Ovary (tissue), 10 donors: ENCODE measurements at regions of chr4 and their contacts with region 1.

Region 1: GRCh38 chr4:102439236-102439614 is 61.9 kb upstream of the NFKB1 start:
- DNase-seq: peak in 2 of 5 donors; percentile 13 to 58
- H3K4me3 ChIP-seq: no peak overlapping the region
- H3K27ac ChIP-seq: peak overlapping the region in 1 of 2 donors; percentile 57
- H3K4me1 ChIP-seq: peaks cover 4% of the 10 kb centered on the region
- H3K27me3 ChIP-seq: no peaks in the 10 kb centered on the region
- CTCF ChIP-seq: no peak
- EP300 ChIP-seq: peak; percentile 74
- POLR2A ChIP-seq: no peak

Region 2: DNA sequence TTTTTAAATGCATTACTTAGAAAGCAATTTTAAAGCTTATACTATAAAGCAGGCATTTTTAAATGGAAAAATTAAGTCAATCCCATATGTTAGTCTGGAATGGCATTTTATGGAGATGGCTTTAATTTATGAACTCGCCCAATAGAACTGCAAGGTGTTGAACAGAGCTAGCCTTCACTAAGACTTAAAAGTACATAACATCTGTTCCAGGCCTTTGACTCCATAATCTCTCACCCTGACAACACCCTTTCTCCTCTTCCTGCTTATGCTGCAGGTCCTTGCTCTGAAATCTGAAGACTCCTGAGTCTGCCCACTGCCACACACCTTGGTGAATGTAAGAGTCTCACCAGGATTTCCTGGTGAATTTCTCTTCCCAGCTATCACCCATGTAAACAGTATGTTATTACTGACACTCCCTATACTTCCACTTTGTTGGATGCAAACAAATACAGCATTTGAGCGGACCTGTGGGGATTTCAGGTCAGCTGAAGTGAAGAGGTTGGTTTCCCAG is 76.2 kb before region 1 on chr4:
- intact Hi-C with region 1: no loop called
- DNase-seq: no peak
- H3K4me3 ChIP-seq: no peak overlapping the region
- H3K27ac ChIP-seq: no peak overlapping the region
- H3K4me1 ChIP-seq: no peaks in the 10 kb centered on the region
- H3K27me3 ChIP-seq: no peaks in the 10 kb centered on the region
- CTCF ChIP-seq: no peak
- EP300 ChIP-seq: no peak
- POLR2A ChIP-seq: no peak

Region 3: DNA sequence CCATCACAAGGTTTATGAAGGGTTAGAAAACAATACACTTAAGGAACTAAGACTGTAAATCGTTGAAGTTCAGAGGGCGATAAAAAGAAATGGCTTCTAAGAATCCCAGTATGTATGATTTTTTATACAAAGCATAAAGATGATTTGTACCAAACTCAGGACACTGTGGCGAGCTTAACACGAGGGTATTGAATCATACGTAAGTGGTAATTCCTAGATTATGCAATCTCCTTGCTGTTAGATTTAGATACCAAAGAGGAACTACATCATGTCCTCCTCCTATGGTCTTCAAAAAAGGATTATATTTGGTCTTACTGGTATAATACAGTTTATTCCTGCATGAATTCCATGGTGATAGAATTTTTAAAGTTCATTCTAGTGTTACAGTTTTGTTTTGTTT is 85.9 kb after region 1 on chr4:
- intact Hi-C with region 1: no loop called
- DNase-seq: no peak
- H3K4me3 ChIP-seq: no peak overlapping the region
- H3K27ac ChIP-seq: no peak overlapping the region
- H3K4me1 ChIP-seq: peaks cover 5% of the 10 kb centered on the region
- H3K27me3 ChIP-seq: no peaks in the 10 kb centered on the region
- CTCF ChIP-seq: no peak
- EP300 ChIP-seq: no peak
- POLR2A ChIP-seq: no peak

Region 4: GRCh38 chr4:103099691-103100392 is 660.6 kb after region 1 on chr4 and contains the start of gene BDH2:
- intact Hi-C with region 1: loop called in 2 of 4 experiments (anchors 10 kb)
- DNase-seq: peak in 4 of 5 donors; percentile 30 to 73 (median 38)
- H3K4me3 ChIP-seq: peak within 1 kb of the TSS; percentile 33
- H3K27ac ChIP-seq: peak within 1 kb of the TSS; percentile 17 to 46
- H3K4me1 ChIP-seq: peaks cover 16% of the 10 kb centered on the region
- H3K27me3 ChIP-seq: no peaks in the 10 kb centered on the region
- CTCF ChIP-seq: peak; percentile 55 to 86 (median 80)
- EP300 ChIP-seq: no peak
- POLR2A ChIP-seq: peak; percentile 15
- total RNA-seq, gene BDH2: 42.2 to 92.6 (median 65.9) TPM